PC-3 (cell line): ENCODE measurements at regions of chr2 and their contacts with region 1.

Region 1: GRCh38 chr2:217367464-217367863 is 507.6 kb upstream of the TNP1 start:
- DNase-seq: peak; percentile 90
- ATAC-seq: peak; percentile 79
- H3K4me3 ChIP-seq: no peak overlapping the region
- H3K27ac ChIP-seq: peak overlapping the region; percentile 94
- H3K4me1 ChIP-seq: peaks cover 62% of the 10 kb centered on the region
- H3K27me3 ChIP-seq: no peaks in the 10 kb centered on the region
- CTCF ChIP-seq: no peak

Region 2: DNA sequence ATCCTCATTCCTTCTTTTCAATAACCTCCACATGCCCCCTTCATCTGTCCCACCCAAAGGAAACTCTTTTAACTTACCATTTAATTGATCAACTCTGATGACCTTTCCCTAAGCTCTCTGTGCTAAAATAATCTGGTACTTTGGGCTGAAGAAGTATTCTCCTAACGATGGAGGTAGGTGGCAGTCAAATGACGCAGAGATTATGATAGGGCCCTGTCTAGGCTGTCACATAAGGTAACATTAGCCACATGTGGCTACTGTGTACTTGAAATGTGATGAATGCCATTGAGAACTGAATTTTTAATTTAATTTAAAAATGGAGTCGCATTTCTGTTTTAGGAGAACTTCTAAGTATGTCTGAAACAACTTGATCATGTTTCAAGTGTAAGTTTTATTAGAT is 367.1 kb before region 1 on chr2:
- CTCF ChIA-PET with region 1: no interaction called
- POLR2A ChIA-PET with region 1: no interaction called
- intact Hi-C with region 1: loop called (anchors 5 kb)
- DNase-seq: peak; percentile 27
- ATAC-seq: peak; percentile 64
- H3K4me3 ChIP-seq: no peak overlapping the region
- H3K27ac ChIP-seq: no peak overlapping the region
- H3K4me1 ChIP-seq: no peaks in the 10 kb centered on the region
- H3K27me3 ChIP-seq: no peaks in the 10 kb centered on the region
- CTCF ChIP-seq: peak; percentile 33; the same call in 1 of the 2 replicates

Region 3: GRCh38 chr2:217283460-217283859 is 84.0 kb before region 1 on chr2:
- CTCF ChIA-PET with region 1: no interaction called
- POLR2A ChIA-PET with region 1: no interaction called
- intact Hi-C with region 1: loop called (anchors 2 kb)
- DNase-seq: no peak
- ATAC-seq: no peak
- H3K4me3 ChIP-seq: no peak overlapping the region
- H3K27ac ChIP-seq: peak overlapping the region; percentile 78
- H3K4me1 ChIP-seq: peaks cover 37% of the 10 kb centered on the region
- H3K27me3 ChIP-seq: no peaks in the 10 kb centered on the region
- CTCF ChIP-seq: no peak